ENCODE measurements at regions of chr20 and their contacts with region 1.

Region 1: DNA sequence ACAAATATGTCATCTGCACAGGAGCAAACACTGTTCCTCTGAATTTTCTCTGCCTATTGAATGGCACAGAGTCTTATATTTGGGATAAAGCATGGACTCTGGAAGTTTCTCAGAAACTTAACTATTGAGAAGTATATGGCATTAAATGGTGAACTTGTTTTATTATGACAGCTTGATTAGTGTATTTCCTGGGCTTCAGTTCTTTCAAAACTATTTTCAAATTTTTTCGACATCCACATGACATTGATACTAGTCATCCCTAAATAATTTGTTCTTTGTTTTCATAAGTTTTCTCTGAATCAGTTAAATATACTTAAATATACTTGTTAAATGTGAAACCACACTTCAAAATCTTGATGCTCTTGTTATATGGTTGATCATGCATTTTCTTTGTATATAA is 144.0 kb upstream of the TSHZ2 start:
- DNase-seq: no peak
- ATAC-seq: no peak
- H3K4me3 ChIP-seq: no peak overlapping the region
- H3K27ac ChIP-seq: no peak overlapping the region
- H3K4me1 ChIP-seq: no peaks in the 10 kb centered on the region
- H3K27me3 ChIP-seq: no peaks in the 10 kb centered on the region
- CTCF ChIP-seq: no peak

Region 2: DNA sequence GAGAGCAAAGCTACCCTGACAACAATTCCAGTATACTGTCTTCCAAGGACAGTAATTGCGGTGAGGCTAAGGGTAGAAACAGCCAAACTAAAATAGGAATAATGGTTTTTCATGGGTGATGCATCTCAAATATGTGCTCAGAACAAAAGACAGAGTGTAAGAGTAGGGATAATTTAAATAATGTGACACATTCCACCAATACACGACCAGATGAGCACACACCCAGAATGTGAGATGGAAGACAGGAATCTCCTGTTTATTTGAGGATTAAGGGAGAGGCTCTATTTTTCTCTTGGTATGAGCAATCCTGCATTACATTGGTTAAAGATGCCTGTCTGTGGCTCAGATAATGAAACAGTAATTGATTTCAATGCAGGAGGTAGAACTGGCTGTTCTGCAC is 343.8 kb before region 1 on chr20:
- CTCF ChIA-PET with region 1: no interaction called
- POLR2A ChIA-PET with region 1: interaction called, 10 read pairs
- in situ Hi-C with region 1: no loop called
- intact Hi-C with region 1: no loop called
- DNase-seq: no peak
- ATAC-seq: no peak
- H3K4me3 ChIP-seq: no peak overlapping the region
- H3K27ac ChIP-seq: no peak overlapping the region
- H3K4me1 ChIP-seq: no peaks in the 10 kb centered on the region
- H3K27me3 ChIP-seq: no peaks in the 10 kb centered on the region
- CTCF ChIP-seq: no peak